Gastrocnemius medialis (tissue), 4 donors: ENCODE measurements at regions of chr7 and their contacts with region 1.

Region 1: DNA sequence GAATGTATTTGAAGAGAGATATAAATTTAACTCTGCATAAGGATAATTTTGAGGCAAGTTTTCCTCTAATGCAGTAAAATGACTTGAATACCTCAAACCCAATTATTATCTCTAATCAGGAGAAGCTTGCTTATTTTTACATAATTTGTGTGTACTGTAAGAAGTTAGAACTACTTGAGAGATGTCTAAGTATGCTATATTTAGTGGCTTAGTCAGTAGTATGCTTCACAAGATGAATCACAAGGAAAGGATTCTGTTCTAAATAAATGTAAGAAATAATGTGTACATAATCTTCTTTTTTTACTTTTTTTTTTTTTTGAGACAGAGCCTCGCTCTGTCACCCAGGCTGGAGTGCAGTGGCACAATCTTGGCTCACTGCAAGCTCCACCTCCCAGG is 13.7 kb downstream of the PHTF2 start:
- DNase-seq: no peak
- ATAC-seq: peak; percentile 92 to 96
- H3K4me3 ChIP-seq: no peak overlapping the region
- H3K27ac ChIP-seq: peak overlapping the region; percentile 56 to 81 (median 68)
- H3K4me1 ChIP-seq: peaks cover 23 to 33% of the 10 kb centered on the region in 2 donors
- H3K27me3 ChIP-seq: no peaks in the 10 kb centered on the region
- CTCF ChIP-seq: no peak
- POLR2A ChIP-seq: no peak

Region 2: GRCh38 chr7:77877791-77878190 is 65.5 kb after region 1 on chr7:
- in situ Hi-C with region 1: no loop called
- intact Hi-C with region 1: loop called (anchors 5 kb)
- DNase-seq: no peak
- ATAC-seq: peak in 1 of 2 donors; percentile 77
- H3K4me3 ChIP-seq: no peak overlapping the region
- H3K27ac ChIP-seq: peak overlapping the region; percentile 6 to 47 (median 20)
- H3K4me1 ChIP-seq: peaks cover 26 to 38% of the 10 kb centered on the region in 2 donors
- H3K27me3 ChIP-seq: no peaks in the 10 kb centered on the region
- CTCF ChIP-seq: no peak
- POLR2A ChIP-seq: no peak

Region 3: GRCh38 chr7:77910124-77910523 is 97.8 kb after region 1 on chr7:
- in situ Hi-C with region 1: no loop called
- intact Hi-C with region 1: no loop called
- DNase-seq: no peak
- ATAC-seq: no peak
- H3K4me3 ChIP-seq: no peak overlapping the region
- H3K27ac ChIP-seq: no peak overlapping the region
- H3K4me1 ChIP-seq: peaks cover 5 to 13% of the 10 kb centered on the region in 2 donors
- H3K27me3 ChIP-seq: no peaks in the 10 kb centered on the region
- CTCF ChIP-seq: no peak
- POLR2A ChIP-seq: no peak

Region 4: GRCh38 chr7:77989981-77990566 is 177.8 kb after region 1 on chr7:
- in situ Hi-C with region 1: no loop called
- intact Hi-C with region 1: no loop called
- DNase-seq: no peak
- ATAC-seq: no peak
- H3K4me3 ChIP-seq: no peak overlapping the region
- H3K27ac ChIP-seq: no peak overlapping the region
- H3K4me1 ChIP-seq: no peaks in the 10 kb centered on the region
- H3K27me3 ChIP-seq: no peaks in the 10 kb centered on the region
- CTCF ChIP-seq: no peak
- POLR2A ChIP-seq: no peak